CD4-positive, alpha-beta memory T cell (primary cell): ENCODE measurements at regions of chr11 and their contacts with region 1.

Region 1: GRCh38 chr11:73760679-73761402 is at the start of gene RAB6A:
- DNase-seq: peak; percentile 99 to 100 (median 100)
- H3K4me3 ChIP-seq: peak within 1 kb of the TSS; percentile 73 to 77
- H3K4me3 Mint-ChIP-seq: peak within 1 kb of the TSS; percentile 85 to 96 (median 91)
- H3K27ac ChIP-seq: peak within 1 kb of the TSS; percentile 81
- H3K27ac Mint-ChIP-seq: peak within 1 kb of the TSS; percentile 87 to 97 (median 96)
- H3K4me1 ChIP-seq: peaks cover 35% of the 10 kb centered on the region
- H3K4me1 Mint-ChIP-seq: peaks cover 21 to 43% (median 34%) of the 10 kb centered on the region in 4 donors
- H3K27me3 ChIP-seq: no peaks in the 10 kb centered on the region
- H3K27me3 Mint-ChIP-seq: no peaks in the 10 kb centered on the region
- total RNA-seq, gene RAB6A: 102 to 118 TPM

Region 2: DNA sequence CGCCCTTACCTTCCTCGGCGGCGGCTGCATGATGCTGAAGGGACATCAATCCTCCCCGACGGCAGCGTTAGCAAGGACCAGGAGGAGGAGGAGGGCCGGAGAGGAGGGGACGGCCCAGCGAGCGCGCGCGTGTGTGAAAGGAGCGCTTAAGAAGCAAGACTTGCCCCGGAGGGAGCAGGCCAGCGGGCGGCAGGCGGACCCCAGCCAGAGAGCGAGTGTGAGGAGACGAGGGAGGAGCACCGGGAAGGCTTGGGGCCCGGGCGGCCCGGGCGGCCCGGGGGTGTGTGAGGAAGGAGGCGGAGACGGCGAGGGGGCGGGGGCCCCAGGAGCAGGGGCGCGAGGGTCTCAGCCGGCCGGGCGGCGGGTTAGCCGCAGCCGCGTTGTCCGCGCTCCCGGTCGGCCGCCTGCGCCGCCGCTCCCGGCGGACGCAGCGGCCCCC is 619.0 kb before region 1 on chr11:
- CTCF ChIA-PET with region 1: no interaction called
- POLR2A ChIA-PET with region 1: interaction called, 3 read pairs
- intact Hi-C with region 1: loop called (anchors 2 kb)
- DNase-seq: peak in 1 of 5 donors; percentile 78
- H3K4me3 ChIP-seq: peak overlapping the region; percentile 80 to 94
- H3K4me3 Mint-ChIP-seq: peak overlapping the region; percentile 92 to 98 (median 96)
- H3K27ac ChIP-seq: peak overlapping the region; percentile 97
- H3K27ac Mint-ChIP-seq: peak overlapping the region; percentile 84 to 98 (median 95)
- H3K4me1 ChIP-seq: peaks cover 49% of the 10 kb centered on the region
- H3K4me1 Mint-ChIP-seq: peaks cover 30 to 55% (median 39%) of the 10 kb centered on the region in 4 donors
- H3K27me3 ChIP-seq: no peaks in the 10 kb centered on the region
- H3K27me3 Mint-ChIP-seq: no peaks in the 10 kb centered on the region

Region 3: DNA sequence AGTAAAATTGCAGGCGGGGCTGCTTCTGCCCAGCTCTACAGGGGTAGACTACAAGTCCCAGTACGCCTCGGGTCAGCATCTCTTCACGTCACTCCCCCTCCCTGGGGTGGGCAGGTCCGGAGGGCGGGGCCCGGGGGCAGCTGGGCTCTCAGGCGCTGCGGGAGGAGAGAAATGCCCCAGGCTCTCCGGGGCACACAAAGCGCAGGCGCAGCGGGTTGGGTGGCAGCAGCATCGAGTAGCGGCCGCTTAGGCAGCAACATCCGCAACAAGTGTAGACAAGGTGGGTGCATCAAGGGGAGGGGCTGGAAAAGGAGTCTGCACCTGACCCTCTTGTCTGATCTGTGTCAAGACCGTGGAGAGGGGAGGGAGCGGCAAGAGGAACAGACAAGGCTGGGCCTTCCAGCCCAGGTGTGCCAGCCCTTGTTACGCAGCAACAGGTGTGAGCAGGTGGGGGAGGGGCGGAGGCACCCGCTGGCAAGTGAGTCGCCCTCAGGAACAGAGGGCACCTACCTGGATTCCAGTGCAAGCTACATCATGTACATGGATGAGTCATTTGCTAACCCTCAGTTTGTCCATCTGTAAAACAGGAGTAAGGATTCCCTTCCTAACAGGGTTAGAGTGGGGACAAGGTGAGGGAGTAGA is 113.3 kb before region 1 on chr11:
- CTCF ChIA-PET with region 1: no interaction called
- POLR2A ChIA-PET with region 1: interaction called, 5 read pairs
- intact Hi-C with region 1: loop called (anchors 1 kb)
- DNase-seq: peak; percentile 91 to 94 (median 93)
- H3K4me3 ChIP-seq: peak overlapping the region; percentile 54
- H3K4me3 Mint-ChIP-seq: peak overlapping the region; percentile 83 to 94 (median 91)
- H3K27ac ChIP-seq: peak overlapping the region; percentile 46
- H3K27ac Mint-ChIP-seq: peak overlapping the region; percentile 72 to 98 (median 96)
- H3K4me1 ChIP-seq: peaks cover 8% of the 10 kb centered on the region
- H3K4me1 Mint-ChIP-seq: peaks cover 9 to 24% (median 20%) of the 10 kb centered on the region in 4 donors
- H3K27me3 ChIP-seq: no peaks in the 10 kb centered on the region
- H3K27me3 Mint-ChIP-seq: no peaks in the 10 kb centered on the region

Region 4: GRCh38 chr11:73787643-73788537 is 27.0 kb after region 1 on chr11 and contains the start of gene MRPL48:
- CTCF ChIA-PET with region 1: interaction called, 7 read pairs
- POLR2A ChIA-PET with region 1: interaction called, 49 read pairs
- intact Hi-C with region 1: loop called (anchors 1 kb)
- DNase-seq: peak; percentile 87 to 90 (median 88)
- H3K4me3 ChIP-seq: peak within 1 kb of the TSS; percentile 92 to 98
- H3K4me3 Mint-ChIP-seq: peak within 1 kb of the TSS; percentile 96 to 100 (median 99)
- H3K27ac ChIP-seq: peak within 1 kb of the TSS; percentile 66
- H3K27ac Mint-ChIP-seq: peak within 1 kb of the TSS; percentile 97 to 99 (median 98)
- H3K4me1 ChIP-seq: peaks cover 18% of the 10 kb centered on the region
- H3K4me1 Mint-ChIP-seq: peaks cover 9 to 29% (median 20%) of the 10 kb centered on the region in 4 donors
- H3K27me3 ChIP-seq: no peaks in the 10 kb centered on the region
- H3K27me3 Mint-ChIP-seq: peaks cover 0 to 3% of the 10 kb centered on the region in 2 donors
- total RNA-seq, gene MRPL48: 24.9 to 28.4 TPM

Region 5: GRCh38 chr11:74170694-74171629 is 410.1 kb after region 1 on chr11 and contains the starts of genes C2CD3 and PPME1:
- CTCF ChIA-PET with region 1: no interaction called
- POLR2A ChIA-PET with region 1: interaction called, 6 read pairs
- intact Hi-C with region 1: loop called (anchors 1 kb)
- DNase-seq: peak; percentile 97 to 99 (median 99)
- H3K4me3 ChIP-seq: peak within 1 kb of the TSS; percentile 74 to 86
- H3K4me3 Mint-ChIP-seq: no peak within 1 kb of the TSS
- H3K27ac ChIP-seq: peak within 1 kb of the TSS; percentile 70
- H3K27ac Mint-ChIP-seq: no peak within 1 kb of the TSS
- H3K4me1 ChIP-seq: peaks cover 40% of the 10 kb centered on the region
- H3K4me1 Mint-ChIP-seq: peaks cover 18 to 22% (median 18%) of the 10 kb centered on the region in 4 donors
- H3K27me3 ChIP-seq: no peaks in the 10 kb centered on the region
- H3K27me3 Mint-ChIP-seq: no peaks in the 10 kb centered on the region
- total RNA-seq, gene C2CD3: 41.9 to 52.7 TPM
- total RNA-seq, gene PPME1: 20.7 to 21.9 TPM